Activated CD8-positive, alpha-beta T cell treated with anti-CD3 and anti-CD28 coated beads, Interleukin-2, amount 10 ng/mL, durations not matched to agents 7 days and 5 days (primary cell): ENCODE measurements at regions of chr20 and their contacts with region 1.

Region 1: DNA sequence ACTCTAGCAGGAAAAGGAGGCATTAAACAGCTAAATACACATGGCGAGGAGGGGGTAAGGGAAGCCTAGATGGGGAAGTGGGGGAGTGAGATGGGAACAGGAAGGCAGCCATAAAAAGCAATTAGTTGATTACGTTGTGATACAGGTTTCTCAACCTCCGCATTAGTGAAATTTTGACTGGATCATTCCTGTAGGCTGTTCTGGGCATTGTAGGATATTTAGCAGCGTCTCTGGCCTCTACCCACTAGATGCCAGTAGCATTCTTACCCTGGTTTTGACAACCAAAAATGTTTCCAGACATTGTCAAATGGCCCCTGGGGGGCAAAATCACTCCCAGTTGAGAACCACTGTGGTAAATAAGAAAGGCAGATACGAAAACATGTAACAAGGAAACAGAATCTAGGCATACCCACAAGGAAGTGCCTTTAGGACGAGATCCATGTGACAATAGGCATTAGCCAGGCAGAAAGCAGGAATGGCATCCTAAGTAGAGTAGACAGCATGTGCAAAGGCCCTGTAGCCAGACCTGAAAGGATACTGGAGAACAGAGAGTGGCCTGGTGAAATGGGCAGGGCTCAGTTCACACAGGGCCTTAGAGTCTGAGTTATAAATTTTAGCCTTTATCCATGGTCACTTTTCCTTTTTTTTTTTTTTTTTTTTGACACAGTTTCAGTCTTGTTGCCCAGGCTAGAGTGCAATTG is 25.8 kb upstream of the PTPN1 start:
- DNase-seq: no peak
- ATAC-seq: no peak
- H3K4me3 Mint-ChIP-seq: peak overlapping the region; percentile 81
- H3K27ac Mint-ChIP-seq: peak overlapping the region; percentile 94
- H3K4me1 Mint-ChIP-seq: peaks cover 46% of the 10 kb centered on the region
- H3K27me3 Mint-ChIP-seq: no peaks in the 10 kb centered on the region

Region 2: GRCh38 chr20:50415516-50416113 is 68.8 kb before region 1 on chr20:
- CTCF ChIA-PET with region 1: no interaction called
- POLR2A ChIA-PET with region 1: no interaction called
- DNase-seq: no peak
- ATAC-seq: no peak
- H3K4me3 Mint-ChIP-seq: no peak overlapping the region
- H3K27ac Mint-ChIP-seq: peak overlapping the region; percentile 39
- H3K4me1 Mint-ChIP-seq: no peaks in the 10 kb centered on the region
- H3K27me3 Mint-ChIP-seq: peaks cover 30% of the 10 kb centered on the region

Region 3: DNA sequence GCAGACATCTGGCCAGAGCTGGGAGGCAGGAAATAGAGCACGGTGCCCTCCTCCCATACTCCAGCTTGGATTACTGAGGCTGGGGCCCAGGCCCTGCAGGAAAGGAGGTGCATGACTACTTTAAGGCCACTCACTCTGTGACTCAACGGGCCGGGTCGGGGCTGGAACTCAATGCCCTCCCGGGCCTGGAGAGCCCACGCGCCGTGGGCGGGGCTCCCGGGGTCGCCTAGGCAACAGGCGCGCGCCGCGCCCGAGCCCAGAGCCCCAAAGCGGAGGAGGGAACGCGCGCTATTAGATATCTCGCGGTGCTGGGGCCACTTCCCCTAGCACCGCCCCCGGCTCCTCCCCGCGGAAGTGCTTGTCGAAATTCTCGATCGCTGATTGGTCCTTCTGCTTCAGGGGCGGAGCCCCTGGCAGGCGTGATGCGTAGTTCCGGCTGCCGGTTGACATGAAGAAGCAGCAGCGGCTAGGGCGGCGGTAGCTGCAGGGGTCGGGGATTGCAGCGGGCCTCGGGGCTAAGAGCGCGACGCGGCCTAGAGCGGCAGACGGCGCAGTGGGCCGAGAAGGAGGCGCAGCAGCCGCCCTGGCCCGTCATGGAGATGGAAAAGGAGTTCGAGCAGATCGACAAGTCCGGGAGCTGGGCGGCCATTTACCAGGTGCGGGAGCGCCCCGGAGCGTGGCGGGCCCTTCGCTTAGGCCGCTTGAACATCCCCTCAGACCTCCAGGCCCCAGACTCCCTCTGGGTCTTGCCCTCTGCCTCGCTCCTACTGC is 25.7 kb after region 1 on chr20 and contains the start of gene PTPN1:
- CTCF ChIA-PET with region 1: interaction called, 38 read pairs
- POLR2A ChIA-PET with region 1: interaction called, 12 read pairs
- DNase-seq: peak; percentile 99
- ATAC-seq: peak; percentile 94
- H3K4me3 Mint-ChIP-seq: peak within 1 kb of the TSS; percentile 96
- H3K27ac Mint-ChIP-seq: peak within 1 kb of the TSS; percentile 93
- H3K4me1 Mint-ChIP-seq: peaks cover 51% of the 10 kb centered on the region
- H3K27me3 Mint-ChIP-seq: no peaks in the 10 kb centered on the region
- total RNA-seq, gene PTPN1: 59.7 to 62.5 TPM

Region 4: GRCh38 chr20:50558483-50558947 is 74.1 kb after region 1 on chr20:
- CTCF ChIA-PET with region 1: no interaction called
- POLR2A ChIA-PET with region 1: no interaction called
- DNase-seq: no peak
- ATAC-seq: no peak
- H3K4me3 Mint-ChIP-seq: no peak overlapping the region
- H3K27ac Mint-ChIP-seq: no peak overlapping the region
- H3K4me1 Mint-ChIP-seq: peaks cover 29% of the 10 kb centered on the region
- H3K27me3 Mint-ChIP-seq: no peaks in the 10 kb centered on the region